Mammary epithelial cell (primary cell): ENCODE measurements at regions of chr18 and their contacts with region 1.

Region 1: GRCh38 chr18:29874519-29875098 is 1167.9 kb downstream of the DSC3 start:
- DNase-seq: peak; percentile 39
- H3K4me3 ChIP-seq: no peak overlapping the region
- H3K27ac ChIP-seq: no peak overlapping the region
- H3K4me1 ChIP-seq: no peaks in the 10 kb centered on the region
- H3K27me3 ChIP-seq: no peaks in the 10 kb centered on the region
- CTCF ChIP-seq: peak; percentile 46 to 71

Region 2: DNA sequence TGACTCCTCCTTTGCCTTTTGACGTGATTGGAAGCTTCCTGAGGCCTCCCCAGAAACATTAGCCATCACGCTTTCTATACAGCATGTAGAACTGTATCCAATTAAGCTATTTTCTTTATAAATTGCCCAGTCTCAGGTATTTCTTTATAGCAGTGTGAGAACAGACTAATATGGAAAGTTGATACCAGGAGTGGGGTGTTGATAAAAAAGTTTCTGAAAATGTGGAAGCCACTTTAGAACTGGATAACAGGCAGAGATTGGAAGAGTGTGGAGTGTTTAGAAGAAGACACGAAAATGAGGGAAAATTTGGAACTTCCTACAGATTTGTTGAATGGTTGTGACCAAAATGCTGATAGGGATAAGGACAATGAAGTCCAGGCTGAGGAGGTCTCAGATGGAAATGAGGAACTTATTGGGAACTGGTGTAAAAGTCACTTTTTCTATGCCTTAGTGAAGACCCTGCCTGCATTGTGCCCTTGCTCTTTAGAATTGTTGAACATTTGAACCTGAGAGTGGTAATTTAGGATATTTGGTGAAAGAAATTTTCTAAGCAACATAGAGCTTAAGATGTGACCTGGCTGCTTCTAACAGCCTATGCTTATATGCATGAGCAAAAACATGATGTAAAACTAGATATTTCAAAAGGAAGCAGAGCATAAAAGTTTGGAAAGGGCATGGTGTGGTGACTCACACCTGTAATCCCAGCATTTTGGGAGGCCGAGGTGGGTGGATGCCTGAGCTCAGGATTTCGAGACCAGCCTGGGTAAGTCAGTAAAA is 198.2 kb after region 1 on chr18:
- CTCF ChIA-PET with region 1: no interaction called
- dilution Hi-C with region 1: no loop called
- in situ Hi-C with region 1: no loop called
- intact Hi-C with region 1: no loop called
- DNase-seq: no peak
- H3K4me3 ChIP-seq: no peak overlapping the region
- H3K27ac ChIP-seq: no peak overlapping the region
- H3K4me1 ChIP-seq: no peaks in the 10 kb centered on the region
- H3K27me3 ChIP-seq: no peaks in the 10 kb centered on the region
- CTCF ChIP-seq: no peak

Region 3: GRCh38 chr18:30088238-30089015 is 213.8 kb after region 1 on chr18:
- CTCF ChIA-PET with region 1: no interaction called
- dilution Hi-C with region 1: no loop called
- in situ Hi-C with region 1: no loop called
- intact Hi-C with region 1: loop called (anchors 10 kb)
- DNase-seq: no peak
- H3K4me3 ChIP-seq: no peak overlapping the region
- H3K27ac ChIP-seq: no peak overlapping the region
- H3K4me1 ChIP-seq: no peaks in the 10 kb centered on the region
- H3K27me3 ChIP-seq: no peaks in the 10 kb centered on the region
- CTCF ChIP-seq: no peak

Region 4: GRCh38 chr18:30271716-30272115 is 397.1 kb after region 1 on chr18:
- CTCF ChIA-PET with region 1: no interaction called
- dilution Hi-C with region 1: no loop called
- in situ Hi-C with region 1: loop called in 1 of 2 experiments (anchors 25 kb)
- intact Hi-C with region 1: no loop called
- DNase-seq: peak; percentile 0
- H3K4me3 ChIP-seq: no peak overlapping the region
- H3K27ac ChIP-seq: no peak overlapping the region
- H3K4me1 ChIP-seq: no peaks in the 10 kb centered on the region
- H3K27me3 ChIP-seq: no peaks in the 10 kb centered on the region
- CTCF ChIP-seq: peak in 1 of 2 donors; percentile 39

Region 5: GRCh38 chr18:30280880-30281470 is 406.4 kb after region 1 on chr18:
- CTCF ChIA-PET with region 1: no interaction called
- dilution Hi-C with region 1: no loop called
- in situ Hi-C with region 1: no loop called
- intact Hi-C with region 1: loop called (anchors 2 kb)
- DNase-seq: peak; percentile 53
- H3K4me3 ChIP-seq: no peak overlapping the region
- H3K27ac ChIP-seq: no peak overlapping the region
- H3K4me1 ChIP-seq: no peaks in the 10 kb centered on the region
- H3K27me3 ChIP-seq: no peaks in the 10 kb centered on the region
- CTCF ChIP-seq: peak; percentile 68 to 69

Region 6: GRCh38 chr18:30971338-30971956 is 1096.8 kb after region 1 on chr18:
- CTCF ChIA-PET with region 1: no interaction called
- dilution Hi-C with region 1: no loop called
- in situ Hi-C with region 1: no loop called
- intact Hi-C with region 1: loop called (anchors 5 kb)
- DNase-seq: no peak
- H3K4me3 ChIP-seq: no peak overlapping the region
- H3K27ac ChIP-seq: no peak overlapping the region
- H3K4me1 ChIP-seq: peaks cover 4% of the 10 kb centered on the region
- H3K27me3 ChIP-seq: no peaks in the 10 kb centered on the region
- CTCF ChIP-seq: peak; percentile 47 to 63